ENCODE measurements at regions of chr10 and their contacts with region 1.

Region 1: DNA sequence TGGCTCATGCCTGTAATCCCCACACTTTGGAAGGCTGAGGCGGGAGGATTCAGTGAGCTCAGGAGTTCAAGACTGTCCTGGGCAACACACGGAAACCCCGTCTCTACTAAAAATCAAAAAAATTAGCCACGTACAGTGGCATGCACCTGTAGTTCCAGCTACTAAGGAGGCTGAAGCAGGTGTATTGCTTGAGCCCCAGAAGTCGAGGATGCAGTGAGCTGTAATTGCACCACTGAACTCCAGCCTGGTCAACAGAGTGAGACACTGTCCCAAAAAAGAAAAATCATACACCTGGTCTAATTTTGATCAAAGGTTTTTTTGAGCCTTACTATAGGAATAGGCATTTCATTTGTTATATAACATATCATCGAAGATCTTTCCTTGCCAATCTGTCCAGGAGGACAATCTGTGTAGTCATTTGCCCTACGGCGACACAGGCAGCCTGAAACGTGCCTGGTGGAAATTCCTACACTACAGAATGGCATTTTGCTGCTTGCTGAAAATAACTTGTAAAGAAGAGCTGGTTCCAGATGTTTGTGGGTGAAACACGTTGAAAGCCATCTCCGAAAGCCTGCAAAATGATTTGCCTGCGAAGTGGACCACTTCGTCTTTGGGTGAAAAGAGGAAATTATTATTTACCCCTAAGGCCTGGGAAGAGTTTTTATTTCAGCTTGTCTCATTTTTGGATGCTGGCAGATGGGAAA is 31.3 kb upstream of the GDI2 start:
- DNase-seq: no peak
- ATAC-seq: no peak
- H3K4me3 Mint-ChIP-seq: no peak overlapping the region
- H3K27ac Mint-ChIP-seq: peak overlapping the region; percentile 67
- H3K4me1 Mint-ChIP-seq: peaks cover 31% of the 10 kb centered on the region
- H3K27me3 Mint-ChIP-seq: peaks cover 2% of the 10 kb centered on the region

Region 2: DNA sequence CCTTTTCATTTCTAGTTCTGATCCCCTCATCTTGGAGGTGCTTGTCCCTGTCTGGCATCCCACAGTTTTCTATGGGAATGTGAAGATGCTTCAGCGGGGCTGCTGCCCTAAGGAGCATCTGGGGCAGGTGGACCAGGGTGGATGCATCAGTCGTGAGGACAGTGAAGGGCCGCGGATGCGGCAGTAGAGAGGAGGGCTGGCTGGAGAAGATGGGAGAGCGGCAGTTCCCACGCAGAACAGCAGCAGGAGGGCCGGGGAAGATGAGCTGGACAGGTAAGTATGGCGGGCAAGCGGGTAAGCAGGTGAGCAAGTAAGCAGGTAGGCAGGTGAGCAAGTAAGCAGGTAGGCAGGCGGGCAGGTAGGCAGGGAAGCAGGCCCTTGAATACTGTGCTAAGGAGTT is 227.0 kb before region 1 on chr10:
- CTCF ChIA-PET with region 1: no interaction called
- POLR2A ChIA-PET with region 1: no interaction called
- intact Hi-C with region 1: no loop called
- DNase-seq: no peak
- ATAC-seq: no peak
- H3K4me3 Mint-ChIP-seq: no peak overlapping the region
- H3K27ac Mint-ChIP-seq: no peak overlapping the region
- H3K4me1 Mint-ChIP-seq: no peaks in the 10 kb centered on the region
- H3K27me3 Mint-ChIP-seq: no peaks in the 10 kb centered on the region

Region 3: GRCh38 chr10:5746197-5746596 is 98.3 kb before region 1 on chr10:
- CTCF ChIA-PET with region 1: no interaction called
- POLR2A ChIA-PET with region 1: no interaction called
- intact Hi-C with region 1: no loop called
- DNase-seq: no peak
- ATAC-seq: no peak
- H3K4me3 Mint-ChIP-seq: no peak overlapping the region
- H3K27ac Mint-ChIP-seq: no peak overlapping the region
- H3K4me1 Mint-ChIP-seq: peaks cover 11% of the 10 kb centered on the region
- H3K27me3 Mint-ChIP-seq: no peaks in the 10 kb centered on the region

Region 4: DNA sequence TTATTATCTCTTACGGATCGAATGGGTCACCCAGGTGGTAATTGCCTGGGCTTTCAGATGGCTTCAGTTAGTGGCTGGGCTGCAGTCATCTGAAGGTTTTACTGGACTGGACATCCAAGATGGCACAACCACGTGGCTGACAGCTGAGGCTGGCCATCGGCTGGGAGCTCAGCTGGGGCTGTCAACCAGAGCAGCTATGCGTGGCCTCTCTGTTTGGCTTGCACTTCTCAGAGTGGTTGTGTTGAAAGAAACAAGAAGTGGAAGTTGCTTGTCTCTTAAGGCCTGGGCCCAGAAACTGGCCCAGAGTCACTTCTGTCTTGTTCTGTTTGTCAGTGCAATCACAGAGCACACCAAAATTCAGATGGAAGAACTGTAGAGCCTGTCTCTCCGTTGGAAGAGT is 25.6 kb before region 1 on chr10:
- CTCF ChIA-PET with region 1: interaction called, 5 read pairs
- POLR2A ChIA-PET with region 1: interaction called, 5 read pairs
- intact Hi-C with region 1: loop called in 1 of 2 experiments (anchors 2 kb)
- DNase-seq: no peak
- ATAC-seq: no peak
- H3K4me3 Mint-ChIP-seq: no peak overlapping the region
- H3K27ac Mint-ChIP-seq: no peak overlapping the region
- H3K4me1 Mint-ChIP-seq: peaks cover 50% of the 10 kb centered on the region
- H3K27me3 Mint-ChIP-seq: no peaks in the 10 kb centered on the region

Region 5: DNA sequence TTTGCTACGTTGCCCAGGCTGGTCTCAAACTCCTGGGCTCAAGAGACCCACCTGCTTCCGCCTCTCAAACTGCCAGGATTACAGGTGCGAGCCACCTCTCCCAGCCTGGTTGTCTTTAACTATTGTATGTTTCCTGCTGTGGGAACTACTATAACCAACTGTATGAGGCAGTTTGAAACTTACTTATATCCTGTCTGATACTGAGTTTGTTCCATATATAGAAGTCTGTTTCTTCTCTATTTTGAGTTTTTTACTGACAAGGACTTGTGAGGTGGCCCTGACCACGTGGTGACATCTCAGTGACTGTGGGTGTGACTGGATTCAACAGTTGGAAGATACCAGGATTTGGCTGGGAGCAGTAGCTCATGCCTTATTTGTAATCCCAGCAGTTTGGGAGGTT is 59.7 kb after region 1 on chr10:
- CTCF ChIA-PET with region 1: no interaction called
- POLR2A ChIA-PET with region 1: no interaction called
- intact Hi-C with region 1: no loop called
- DNase-seq: peak; percentile 16
- ATAC-seq: peak; percentile 88
- H3K4me3 Mint-ChIP-seq: no peak overlapping the region
- H3K27ac Mint-ChIP-seq: peak overlapping the region; percentile 56
- H3K4me1 Mint-ChIP-seq: peaks cover 21% of the 10 kb centered on the region
- H3K27me3 Mint-ChIP-seq: no peaks in the 10 kb centered on the region

Measured in activated CD4-positive, alpha-beta T cell treated with anti-CD3 and anti-CD28 coated beads for 36 hours (primary cell).